ENCODE measurements at regions of chr1 and their contacts with region 1.

Region 1: GRCh38 chr1:6577831-6578580 is 1.8 kb upstream of the ZBTB48 start:
- DNase-seq: no peak
- H3K4me3 ChIP-seq: no peak overlapping the region
- H3K27ac ChIP-seq: no peak overlapping the region
- H3K4me1 ChIP-seq: peaks cover 14% of the 10 kb centered on the region
- H3K27me3 ChIP-seq: no peaks in the 10 kb centered on the region
- CTCF ChIP-seq: no peak

Region 2: GRCh38 chr1:5660141-5660935 is 917.7 kb before region 1 on chr1:
- CTCF ChIA-PET with region 1: no interaction called
- POLR2A ChIA-PET with region 1: no interaction called
- intact Hi-C with region 1: no loop called
- DNase-seq: no peak
- H3K4me3 ChIP-seq: no peak overlapping the region
- H3K27ac ChIP-seq: no peak overlapping the region
- H3K4me1 ChIP-seq: no peaks in the 10 kb centered on the region
- H3K27me3 ChIP-seq: no peaks in the 10 kb centered on the region
- CTCF ChIP-seq: no peak

Region 3: GRCh38 chr1:6235296-6235677 is 342.7 kb before region 1 on chr1:
- CTCF ChIA-PET with region 1: no interaction called
- POLR2A ChIA-PET with region 1: interaction called, 23 read pairs
- intact Hi-C with region 1: no loop called
- DNase-seq: no peak
- H3K4me3 ChIP-seq: peak overlapping the region; percentile 61
- H3K27ac ChIP-seq: peak overlapping the region; percentile 91
- H3K4me1 ChIP-seq: no peaks in the 10 kb centered on the region
- H3K27me3 ChIP-seq: no peaks in the 10 kb centered on the region
- CTCF ChIP-seq: no peak

Region 4: DNA sequence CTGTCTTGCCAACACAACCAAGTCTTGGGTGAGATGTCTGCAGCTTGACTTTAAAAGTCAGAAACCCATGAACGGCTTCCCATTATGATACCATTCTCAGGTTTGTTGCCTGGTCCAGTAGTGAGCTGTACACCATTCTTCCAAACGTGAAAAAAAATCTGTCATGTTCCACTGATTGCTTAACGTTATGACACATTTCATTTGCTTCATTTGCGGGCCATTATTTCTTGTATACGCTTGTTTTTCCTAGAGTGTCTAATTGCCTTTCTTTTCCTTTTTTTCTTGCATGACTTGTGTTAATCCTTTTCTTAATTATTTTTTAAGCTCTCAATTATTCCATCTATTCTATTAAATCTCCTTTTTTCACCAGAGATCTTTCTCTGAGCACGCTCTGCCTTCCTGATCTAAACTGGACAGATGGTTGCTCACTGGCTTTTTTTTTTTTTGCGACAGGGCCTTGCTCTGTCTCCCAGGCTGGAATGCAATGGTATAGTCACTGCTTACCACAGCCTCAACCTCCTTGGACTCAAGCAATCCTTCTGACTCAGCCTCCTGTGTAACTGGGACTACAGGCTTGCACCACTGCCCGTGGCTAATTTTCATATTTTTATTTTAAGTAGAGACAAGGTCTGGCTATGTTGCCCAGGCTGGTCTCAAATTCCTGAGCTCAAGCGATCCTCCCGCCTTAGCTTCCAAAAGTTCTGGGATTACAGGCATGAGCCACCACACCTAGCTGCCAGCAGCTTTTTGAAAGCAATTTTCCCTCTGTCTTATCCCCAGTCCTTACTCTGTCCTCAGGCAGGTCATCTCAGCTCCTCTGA is 175.5 kb after region 1 on chr1:
- CTCF ChIA-PET with region 1: no interaction called
- POLR2A ChIA-PET with region 1: no interaction called
- intact Hi-C with region 1: no loop called
- DNase-seq: no peak
- H3K4me3 ChIP-seq: no peak overlapping the region
- H3K27ac ChIP-seq: no peak overlapping the region
- H3K4me1 ChIP-seq: no peaks in the 10 kb centered on the region
- H3K27me3 ChIP-seq: peaks cover 52% of the 10 kb centered on the region
- CTCF ChIP-seq: no peak